Psoas muscle (tissue), 8 donors: ENCODE measurements at regions of chr11 and their contacts with region 1.

Region 1: DNA sequence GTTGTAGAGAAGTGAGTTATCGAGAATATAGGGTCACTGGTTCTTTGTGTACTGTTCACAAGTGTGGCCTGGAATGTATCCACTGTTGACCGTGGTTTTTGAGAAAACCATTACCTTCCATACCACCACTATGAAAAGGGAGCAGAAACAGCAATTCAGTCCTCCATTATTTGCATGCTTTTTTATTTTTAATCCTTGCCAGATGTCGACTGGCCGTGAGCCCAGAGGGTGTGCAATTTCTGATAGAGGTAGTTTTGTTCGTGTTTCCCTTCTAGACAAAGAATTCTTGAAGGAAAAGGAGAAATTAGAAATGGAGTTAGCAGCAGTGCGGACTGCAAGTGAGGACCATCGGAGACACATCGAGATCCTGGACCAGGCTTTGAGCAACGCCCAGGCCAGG is 81.7 kb downstream of the AMOTL1 start:
- DNase-seq: no peak
- ATAC-seq: no peak
- H3K4me3 ChIP-seq: no peak overlapping the region
- H3K27ac ChIP-seq: peak overlapping the region; percentile 78
- H3K4me1 ChIP-seq: peaks cover 33% of the 10 kb centered on the region
- H3K27me3 ChIP-seq: no peaks in the 10 kb centered on the region
- CTCF ChIP-seq: no peak

Region 2: DNA sequence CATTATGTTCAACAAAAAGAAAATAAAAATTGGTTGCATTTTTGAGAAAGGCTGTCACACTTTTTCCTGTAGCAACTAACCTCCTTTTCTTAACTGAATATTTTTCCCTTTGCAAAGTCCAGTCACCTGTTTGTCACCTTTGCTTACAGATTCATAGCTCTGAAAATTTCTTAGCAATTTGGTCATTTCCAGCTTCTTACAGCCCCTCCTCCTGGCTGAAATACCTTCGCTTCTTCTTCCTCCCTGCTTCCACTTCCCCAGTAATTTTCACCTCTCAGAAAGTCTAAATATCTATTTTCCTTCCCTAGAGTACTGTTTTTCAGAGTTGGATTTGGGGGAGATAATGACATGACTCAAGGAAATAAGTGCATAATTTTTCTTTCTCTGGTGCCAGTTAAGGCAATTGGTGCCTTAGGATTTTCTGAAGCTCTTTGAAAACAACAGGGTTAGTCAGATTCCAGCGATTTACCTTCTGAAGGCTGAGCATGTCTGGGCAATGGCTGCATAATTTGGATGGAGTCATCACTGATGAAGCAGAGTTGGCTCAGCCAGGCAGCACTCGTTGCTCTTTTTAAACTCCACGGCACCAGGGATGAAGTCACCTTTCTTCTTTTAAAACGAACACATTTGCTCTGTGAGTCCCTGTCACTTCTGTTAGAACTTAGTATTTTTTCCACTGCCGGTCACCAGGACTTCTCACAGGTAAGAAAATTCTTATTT is 143.8 kb before region 1 on chr11:
- intact Hi-C with region 1: loop called in 1 of 2 experiments (anchors 10 kb)
- DNase-seq: peak in 1 of 2 donors; percentile 64
- ATAC-seq: peak; percentile 86 to 93 (median 87)
- H3K4me3 ChIP-seq: peak overlapping the region; percentile 80
- H3K27ac ChIP-seq: peak overlapping the region; percentile 95
- H3K4me1 ChIP-seq: peaks cover 35% of the 10 kb centered on the region
- H3K27me3 ChIP-seq: no peaks in the 10 kb centered on the region
- CTCF ChIP-seq: no peak

Region 3: GRCh38 chr11:94830828-94831510 is 18.9 kb before region 1 on chr11:
- intact Hi-C with region 1: loop called in 1 of 2 experiments (anchors 2 kb)
- DNase-seq: no peak
- ATAC-seq: no peak
- H3K4me3 ChIP-seq: no peak overlapping the region
- H3K27ac ChIP-seq: peak overlapping the region; percentile 4
- H3K4me1 ChIP-seq: peaks cover 41% of the 10 kb centered on the region
- H3K27me3 ChIP-seq: no peaks in the 10 kb centered on the region
- CTCF ChIP-seq: no peak

Region 4: GRCh38 chr11:94885133-94885532 is 35.3 kb after region 1 on chr11:
- intact Hi-C with region 1: no loop called
- DNase-seq: no peak
- ATAC-seq: peak in 3 of 4 donors; percentile 3 to 14 (median 13)
- H3K4me3 ChIP-seq: no peak overlapping the region
- H3K27ac ChIP-seq: no peak overlapping the region
- H3K4me1 ChIP-seq: no peaks in the 10 kb centered on the region
- H3K27me3 ChIP-seq: no peaks in the 10 kb centered on the region
- CTCF ChIP-seq: no peak

Region 5: GRCh38 chr11:95231127-95231880 is 381.5 kb after region 1 on chr11 and contains the start of gene SESN3:
- intact Hi-C with region 1: no loop called
- DNase-seq: peak; percentile 99
- ATAC-seq: peak; percentile 97 to 98 (median 98)
- H3K4me3 ChIP-seq: peak within 1 kb of the TSS; percentile 83
- H3K27ac ChIP-seq: peak within 1 kb of the TSS; percentile 62
- H3K4me1 ChIP-seq: peaks cover 8% of the 10 kb centered on the region
- H3K27me3 ChIP-seq: no peaks in the 10 kb centered on the region
- CTCF ChIP-seq: no peak
- total RNA-seq, gene SESN3: 5.3 to 94.6 (median 15.6) TPM